GM12878 (cell line): ENCODE measurements at regions of chr2 and their contacts with region 1.

Region 1: DNA sequence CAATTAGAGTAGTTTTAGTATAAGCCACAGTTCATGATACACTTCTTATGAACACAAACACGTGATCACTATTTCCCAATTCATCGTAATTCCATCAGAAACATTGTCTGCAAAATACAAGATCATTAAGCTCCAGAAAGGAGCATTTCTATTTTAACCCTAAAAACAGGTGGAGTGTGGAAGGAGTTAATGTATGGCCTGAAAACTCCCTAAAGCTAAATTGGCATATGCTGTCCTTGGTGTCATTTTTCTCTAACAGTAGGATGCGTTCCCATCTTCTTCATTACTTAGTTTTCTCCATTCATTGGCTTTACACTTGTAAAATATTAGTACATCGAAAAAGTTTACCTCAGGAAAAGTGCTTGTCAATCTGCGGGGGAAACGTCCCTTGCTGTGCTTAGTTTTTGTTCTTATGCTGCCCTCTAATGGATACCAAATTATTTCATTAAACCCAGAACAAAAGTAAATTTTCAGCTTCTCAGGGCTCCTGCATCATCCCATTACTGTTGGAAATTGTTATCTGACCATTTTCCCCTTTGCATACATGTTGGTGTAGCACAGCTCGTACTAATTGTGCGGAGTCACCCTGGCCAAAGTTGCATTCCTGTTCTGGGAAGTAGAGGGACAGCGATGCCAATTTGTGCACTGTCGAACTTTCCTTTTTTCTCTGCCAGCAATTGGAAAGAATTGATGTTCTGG is 153.4 kb downstream of the GPD2 start:
- DNase-seq: no peak
- ATAC-seq: peak; percentile 89
- H3K4me3 ChIP-seq: no peak overlapping the region
- H3K27ac ChIP-seq: no peak overlapping the region
- H3K4me1 ChIP-seq: no peaks in the 10 kb centered on the region; the same call in none of the 2 replicates
- H3K27me3 ChIP-seq: no peaks in the 10 kb centered on the region
- CTCF ChIP-seq: peak; percentile 36 to 79 (median 54); a peak in 5 of 6 replicates
- EP300 ChIP-seq: no peak
- POLR2A ChIP-seq: no peak
- RAD21 ChIP-seq: peak; percentile 94

Region 2: DNA sequence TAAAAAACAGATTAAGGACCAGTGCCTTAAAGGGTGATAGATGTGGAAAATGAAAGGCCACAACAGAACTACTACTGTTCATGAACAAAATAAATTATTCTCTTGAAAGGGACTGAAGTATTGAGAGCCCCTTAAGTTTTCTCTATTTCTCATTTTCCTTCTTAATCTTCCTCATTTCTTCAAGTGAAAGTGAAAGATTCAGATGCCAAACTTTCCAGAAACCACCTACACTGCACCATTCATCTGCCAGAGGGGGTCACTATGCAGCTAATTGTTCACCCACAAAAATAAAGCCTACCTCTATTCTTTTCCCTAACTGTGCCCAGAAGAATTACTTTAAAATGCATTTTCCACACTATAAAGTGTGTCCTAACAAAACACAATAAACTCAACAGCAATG is 397.1 kb before region 1 on chr2:
- CTCF ChIA-PET with region 1: interaction called, 23 read pairs
- POLR2A ChIA-PET with region 1: no interaction called
- RAD21 ChIA-PET with region 1: interaction called, 4 read pairs
- SMC1A ChIA-PET with region 1: interaction called, 22 read pairs
- in situ Hi-C with region 1: no loop called
- intact Hi-C with region 1: loop called (anchors 2 kb)
- DNase-seq: peak; percentile 3
- ATAC-seq: peak; percentile 83
- H3K4me3 ChIP-seq: no peak overlapping the region
- H3K27ac ChIP-seq: no peak overlapping the region
- H3K4me1 ChIP-seq: no peaks in the 10 kb centered on the region
- H3K27me3 ChIP-seq: no peaks in the 10 kb centered on the region
- CTCF ChIP-seq: peak in 2 of 3 experiments; percentile 18 to 28; a peak in 3 of 6 replicates
- EP300 ChIP-seq: no peak
- POLR2A ChIP-seq: no peak
- RAD21 ChIP-seq: peak; percentile 53

Region 3: DNA sequence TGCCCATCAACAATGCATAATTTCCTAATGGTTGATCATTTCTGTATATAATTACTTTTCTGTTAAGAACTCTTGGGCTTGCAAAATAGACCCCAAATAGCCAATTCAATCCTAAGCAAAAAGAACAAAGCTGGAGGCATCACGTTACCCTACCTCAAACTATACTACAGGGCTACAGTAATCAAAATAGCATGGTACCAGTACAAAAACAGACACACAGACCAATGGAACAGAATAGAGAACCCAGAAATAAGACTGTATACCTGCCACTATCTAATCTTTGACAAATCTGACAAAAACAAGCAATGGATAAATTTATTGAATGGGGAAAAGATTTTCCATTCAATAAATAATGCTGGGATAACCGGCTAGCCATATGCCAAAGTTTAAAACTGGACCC is 335.8 kb before region 1 on chr2:
- CTCF ChIA-PET with region 1: no interaction called
- POLR2A ChIA-PET with region 1: no interaction called
- RAD21 ChIA-PET with region 1: no interaction called
- SMC1A ChIA-PET with region 1: no interaction called
- in situ Hi-C with region 1: no loop called
- intact Hi-C with region 1: no loop called
- DNase-seq: no peak
- ATAC-seq: no peak
- H3K4me3 ChIP-seq: no peak overlapping the region
- H3K27ac ChIP-seq: no peak overlapping the region
- H3K4me1 ChIP-seq: no peaks in the 10 kb centered on the region
- H3K27me3 ChIP-seq: no peaks in the 10 kb centered on the region
- CTCF ChIP-seq: no peak
- EP300 ChIP-seq: no peak
- POLR2A ChIP-seq: no peak
- RAD21 ChIP-seq: no peak

Region 4: DNA sequence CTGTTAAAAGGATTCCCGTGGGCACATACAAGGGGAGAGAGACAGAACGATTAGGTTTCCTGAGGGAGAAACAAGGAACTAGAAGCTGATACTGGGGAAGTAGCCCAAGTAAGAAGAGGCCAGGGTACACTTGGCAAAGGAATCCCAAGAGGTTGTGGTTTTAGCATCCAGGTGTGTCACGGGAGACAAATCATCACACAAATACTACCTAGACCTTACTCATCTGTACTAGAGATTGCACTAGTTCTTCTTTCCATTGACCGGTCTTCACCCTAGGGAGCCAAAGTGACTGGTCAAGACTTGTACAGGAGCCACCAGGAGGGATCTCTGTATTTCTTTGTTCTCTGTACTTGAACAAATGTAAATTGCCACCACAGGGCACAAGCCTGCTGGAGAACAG is 242.8 kb before region 1 on chr2:
- CTCF ChIA-PET with region 1: interaction called, 14 read pairs
- POLR2A ChIA-PET with region 1: no interaction called
- RAD21 ChIA-PET with region 1: interaction called, 36 read pairs
- SMC1A ChIA-PET with region 1: interaction called, 10 read pairs
- in situ Hi-C with region 1: loop called (anchors 25 kb)
- intact Hi-C with region 1: no loop called
- DNase-seq: no peak
- ATAC-seq: no peak
- H3K4me3 ChIP-seq: no peak overlapping the region
- H3K27ac ChIP-seq: no peak overlapping the region
- H3K4me1 ChIP-seq: no peaks in the 10 kb centered on the region
- H3K27me3 ChIP-seq: no peaks in the 10 kb centered on the region
- CTCF ChIP-seq: no peak
- EP300 ChIP-seq: no peak
- POLR2A ChIP-seq: no peak
- RAD21 ChIP-seq: no peak

Region 5: GRCh38 chr2:156435715-156436496 is 153.6 kb before region 1 on chr2 and contains the start of gene GPD2:
- CTCF ChIA-PET with region 1: interaction called, 6 read pairs
- POLR2A ChIA-PET with region 1: no interaction called
- RAD21 ChIA-PET with region 1: interaction called, 7 read pairs
- SMC1A ChIA-PET with region 1: interaction called, 28 read pairs
- in situ Hi-C with region 1: no loop called
- intact Hi-C with region 1: no loop called
- DNase-seq: no peak
- ATAC-seq: peak; percentile 77
- H3K4me3 ChIP-seq: peak within 1 kb of the TSS; percentile 68
- H3K27ac ChIP-seq: peak within 1 kb of the TSS; percentile 81
- H3K4me1 ChIP-seq: peaks cover 23% of the 10 kb centered on the region
- H3K27me3 ChIP-seq: no peaks in the 10 kb centered on the region
- CTCF ChIP-seq: no peak
- EP300 ChIP-seq: 0 out of 4 replicates have a peak, but pooled peaks of 1 of the 2 experiments have one; percentile 4
- POLR2A ChIP-seq: peak; percentile 90
- RAD21 ChIP-seq: 0 out of 2 replicates have a peak, but pooled peaks have one; percentile 10
- polyA plus RNA-seq, gene GPD2: 10.0 to 10.5 TPM

Region 6: GRCh38 chr2:156511803-156512202 is 77.7 kb before region 1 on chr2:
- CTCF ChIA-PET with region 1: interaction called, 6 read pairs
- POLR2A ChIA-PET with region 1: no interaction called
- RAD21 ChIA-PET with region 1: interaction called, 12 read pairs
- SMC1A ChIA-PET with region 1: interaction called, 5 read pairs
- in situ Hi-C with region 1: no loop called
- intact Hi-C with region 1: no loop called
- DNase-seq: no peak
- ATAC-seq: peak; percentile 79
- H3K4me3 ChIP-seq: no peak overlapping the region
- H3K27ac ChIP-seq: peak overlapping the region; percentile 45; the same call in 1 of the 2 replicates
- H3K4me1 ChIP-seq: peaks cover 23% of the 10 kb centered on the region
- H3K27me3 ChIP-seq: no peaks in the 10 kb centered on the region
- CTCF ChIP-seq: no peak
- EP300 ChIP-seq: 0 out of 4 replicates have a peak, but pooled peaks have one; percentile 13 to 34
- POLR2A ChIP-seq: no peak
- RAD21 ChIP-seq: no peak

Region 7: GRCh38 chr2:156565066-156565710 is 24.3 kb before region 1 on chr2:
- CTCF ChIA-PET with region 1: interaction called, 10 read pairs
- POLR2A ChIA-PET with region 1: no interaction called
- RAD21 ChIA-PET with region 1: interaction called, 5 read pairs
- SMC1A ChIA-PET with region 1: interaction called, 12 read pairs
- in situ Hi-C with region 1: no loop called
- intact Hi-C with region 1: no loop called
- DNase-seq: no peak
- ATAC-seq: peak; percentile 68
- H3K4me3 ChIP-seq: no peak overlapping the region
- H3K27ac ChIP-seq: no peak overlapping the region
- H3K4me1 ChIP-seq: no peaks in the 10 kb centered on the region
- H3K27me3 ChIP-seq: no peaks in the 10 kb centered on the region
- CTCF ChIP-seq: no peak
- EP300 ChIP-seq: no peak
- POLR2A ChIP-seq: no peak
- RAD21 ChIP-seq: no peak

Region 8: DNA sequence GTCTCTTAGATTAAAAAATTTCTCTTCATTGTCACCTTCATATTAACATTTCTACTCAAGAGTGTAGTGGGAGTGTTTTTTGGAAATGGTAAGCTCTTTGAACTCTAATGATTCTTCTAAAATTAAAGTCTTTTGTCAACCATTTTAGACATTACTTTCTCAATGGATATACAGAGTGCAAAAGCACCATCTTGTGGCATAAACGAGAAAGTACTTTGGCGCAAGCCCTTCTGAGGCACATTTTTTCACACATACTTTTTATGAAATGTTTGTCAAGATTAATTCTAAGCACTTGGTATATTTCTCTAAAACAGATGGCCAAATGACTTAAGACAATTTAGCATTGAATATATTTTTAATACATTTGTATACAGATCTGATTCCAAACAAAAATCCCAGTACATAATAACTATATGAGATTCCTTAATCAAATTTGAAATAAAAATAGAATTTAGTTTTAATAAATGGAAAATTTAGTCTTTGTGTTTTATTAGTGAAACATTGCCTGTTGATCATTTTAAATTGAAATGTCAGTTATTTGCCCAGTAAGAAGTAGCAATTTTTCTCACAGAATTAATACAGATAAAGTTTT is 604.7 kb after region 1 on chr2:
- CTCF ChIA-PET with region 1: interaction called, 33 read pairs
- POLR2A ChIA-PET with region 1: no interaction called
- RAD21 ChIA-PET with region 1: interaction called, 20 read pairs
- SMC1A ChIA-PET with region 1: interaction called, 21 read pairs
- in situ Hi-C with region 1: no loop called
- intact Hi-C with region 1: loop called (anchors 5 kb)
- DNase-seq: no peak
- ATAC-seq: peak; percentile 83
- H3K4me3 ChIP-seq: no peak overlapping the region
- H3K27ac ChIP-seq: no peak overlapping the region
- H3K4me1 ChIP-seq: peaks cover 10% of the 10 kb centered on the region; the same call in 1 of the 2 replicates
- H3K27me3 ChIP-seq: peaks cover 0 to 3% of the 10 kb centered on the region in 2 experiments; a peak in 1 of 4 replicates
- CTCF ChIP-seq: peak; percentile 59 to 77 (median 63)
- EP300 ChIP-seq: no peak
- POLR2A ChIP-seq: no peak
- RAD21 ChIP-seq: peak; percentile 93